ENCODE measurements at regions of chr5 and their contacts with region 1.

Region 1: DNA sequence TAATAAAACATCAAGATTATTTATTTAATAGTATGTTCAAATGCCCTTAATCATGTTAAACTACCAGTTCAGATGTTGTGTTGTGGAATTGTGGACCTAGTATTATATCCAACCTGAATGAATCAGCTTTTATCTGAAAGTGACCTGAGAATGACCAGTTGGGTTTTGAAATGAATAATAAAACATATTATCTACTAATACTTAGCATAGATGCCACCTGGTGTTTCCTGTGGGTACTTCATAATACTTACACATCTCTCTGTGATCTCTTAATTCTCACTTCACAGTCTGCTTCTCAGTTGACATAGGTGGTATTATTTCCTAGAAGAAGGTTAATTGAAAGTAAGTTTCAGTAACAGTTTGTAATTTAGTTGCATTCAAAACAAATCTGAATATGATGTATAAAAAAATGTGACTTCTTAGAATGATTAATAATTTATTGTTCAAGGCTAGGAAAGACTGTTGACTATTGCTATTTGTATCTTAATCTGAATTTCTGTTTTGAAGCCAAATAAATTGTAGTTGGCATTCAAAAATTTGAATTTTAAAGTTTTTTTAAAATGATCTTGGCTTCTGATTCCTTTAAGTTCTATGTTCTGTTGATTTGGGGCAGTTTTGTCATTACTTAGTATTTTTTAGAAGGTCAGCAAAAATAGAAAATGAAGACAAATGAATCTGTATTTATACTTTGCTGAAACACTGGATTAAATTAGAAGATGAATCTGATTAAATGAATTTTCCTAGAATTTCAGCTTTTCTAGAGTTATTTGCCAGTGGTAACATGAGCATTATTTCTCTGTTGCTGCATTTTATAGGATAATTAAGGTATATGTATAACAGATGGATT is 48.2 kb downstream of the KIF2A start:
- DNase-seq: no peak
- ATAC-seq: no peak
- H3K4me3 ChIP-seq: no peak overlapping the region
- H3K27ac ChIP-seq: no peak overlapping the region
- H3K4me1 ChIP-seq: no peaks in the 10 kb centered on the region
- H3K27me3 ChIP-seq: no peaks in the 10 kb centered on the region

Region 2: DNA sequence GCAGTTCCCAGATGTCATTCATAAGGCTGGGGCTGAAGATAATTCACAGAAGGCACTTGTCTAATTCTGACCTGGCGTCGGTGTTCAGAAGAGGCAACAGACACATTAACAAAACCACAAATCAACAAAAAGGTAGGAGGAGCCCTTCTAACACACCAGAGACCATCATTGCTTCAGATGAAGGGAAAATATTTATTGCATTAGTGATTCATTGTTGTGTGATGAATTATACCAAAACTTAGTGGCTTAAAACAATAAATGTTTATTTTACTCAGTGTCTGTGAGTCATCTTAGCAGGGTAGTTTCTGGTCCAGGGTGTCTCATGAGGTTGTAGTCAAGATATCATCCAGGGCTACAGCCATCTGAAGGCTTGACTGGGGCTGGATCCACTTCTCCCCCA is 139.6 kb before region 1 on chr5:
- intact Hi-C with region 1: loop called in 1 of 2 experiments (anchors 5 kb)
- DNase-seq: no peak
- ATAC-seq: no peak
- H3K4me3 ChIP-seq: no peak overlapping the region
- H3K27ac ChIP-seq: no peak overlapping the region
- H3K4me1 ChIP-seq: no peaks in the 10 kb centered on the region
- H3K27me3 ChIP-seq: peaks cover 0 to 1% of the 10 kb centered on the region in 2 donors

Region 3: DNA sequence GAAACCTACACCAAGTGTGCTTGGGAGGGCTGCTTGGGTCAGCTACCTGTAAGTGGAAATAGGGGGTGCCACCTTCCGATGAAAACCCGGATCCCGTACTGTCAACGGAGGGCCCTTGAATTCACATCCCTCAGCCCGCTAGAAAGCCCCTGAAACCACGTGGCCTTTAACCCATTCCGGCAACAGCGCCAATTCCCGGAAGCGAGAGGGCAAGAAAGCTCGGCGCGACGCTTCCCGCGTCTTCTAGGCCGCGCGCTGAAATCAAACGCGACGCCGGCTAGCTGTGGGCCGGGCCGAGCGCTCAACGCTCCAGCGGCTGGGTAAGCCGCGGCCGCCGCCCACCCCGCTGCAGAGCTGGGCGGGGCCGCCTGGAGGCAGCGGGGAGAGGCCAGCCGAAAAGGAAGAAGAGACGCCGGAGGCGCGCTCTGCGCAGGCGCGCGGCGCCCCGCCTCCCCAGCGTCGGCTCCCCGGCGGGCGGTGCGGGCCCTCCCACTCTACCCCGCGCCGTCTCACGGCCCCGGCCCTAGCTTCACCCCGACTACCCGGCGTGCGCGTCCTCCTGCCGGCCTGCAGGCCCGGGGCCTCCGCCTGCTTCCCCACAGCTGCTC is 48.4 kb before region 1 on chr5 and contains the start of gene KIF2A:
- intact Hi-C with region 1: loop called (anchors 5 to 10 kb)
- DNase-seq: peak; percentile 93 to 96
- ATAC-seq: peak; percentile 97
- H3K4me3 ChIP-seq: peak within 1 kb of the TSS; percentile 93 to 99
- H3K27ac ChIP-seq: peak within 1 kb of the TSS in 1 of 2 donors; percentile 60
- H3K4me1 ChIP-seq: no peaks in the 10 kb centered on the region
- H3K27me3 ChIP-seq: no peaks in the 10 kb centered on the region
- total RNA-seq, gene KIF2A: 25.5 to 33.9 TPM

Region 4: DNA sequence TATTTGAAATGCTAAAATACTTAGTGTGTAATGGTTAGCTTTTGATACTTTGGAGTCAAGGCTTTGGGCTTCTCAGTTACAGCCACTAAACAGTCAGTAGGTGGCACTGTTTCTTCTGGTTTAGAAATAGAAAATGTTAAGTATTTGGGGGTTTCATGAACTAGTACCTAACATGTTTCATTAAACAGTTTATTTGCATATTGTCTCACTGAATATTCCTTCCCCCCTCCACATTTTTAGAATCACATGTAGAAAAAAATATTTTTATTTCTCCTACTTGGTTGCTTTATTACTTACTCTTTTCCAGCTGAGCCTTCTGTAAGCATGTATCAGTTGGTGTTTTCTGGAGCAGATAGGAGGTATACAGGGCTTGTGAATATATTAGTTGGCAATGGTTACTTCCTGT is 106.3 kb after region 1 on chr5:
- intact Hi-C with region 1: no loop called
- DNase-seq: no peak
- ATAC-seq: no peak
- H3K4me3 ChIP-seq: no peak overlapping the region
- H3K27ac ChIP-seq: no peak overlapping the region
- H3K4me1 ChIP-seq: no peaks in the 10 kb centered on the region
- H3K27me3 ChIP-seq: no peaks in the 10 kb centered on the region

Measured in aorta (tissue), 5 donors.